WTC11 (cell line): ENCODE measurements at regions of chr9 and their contacts with region 1.

Region 1: DNA sequence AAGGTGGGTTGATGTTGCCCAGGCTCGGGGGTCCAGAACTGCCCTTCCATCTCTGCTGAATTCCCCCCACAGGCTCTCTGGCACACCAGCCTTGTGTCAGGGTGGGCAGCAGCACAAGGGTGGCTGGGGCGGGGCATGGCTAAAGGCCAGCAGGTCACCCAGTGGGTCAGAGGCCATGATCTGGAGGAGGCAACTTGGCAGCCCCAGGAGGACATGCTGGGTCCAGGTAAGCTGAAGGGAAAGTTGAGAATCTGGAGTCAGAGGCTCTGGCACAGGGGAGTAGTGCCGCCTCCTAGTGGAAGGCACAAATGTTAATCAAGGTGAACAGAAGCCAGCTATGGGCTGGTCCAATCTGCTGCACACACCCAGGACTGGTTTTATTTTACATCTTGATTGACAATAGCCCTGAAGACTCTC is 6.2 kb downstream of the TMEM8B start:
- DNase-seq: peak; percentile 52
- ATAC-seq: peak; percentile 90
- H3K4me3 Mint-ChIP-seq: no peak overlapping the region
- H3K27ac Mint-ChIP-seq: no peak overlapping the region
- H3K4me1 Mint-ChIP-seq: peaks cover 19% of the 10 kb centered on the region
- H3K27me3 Mint-ChIP-seq: peaks cover 21% of the 10 kb centered on the region
- CTCF ChIP-seq: peak; percentile 31; the same call in 1 of the 2 replicates

Region 2: DNA sequence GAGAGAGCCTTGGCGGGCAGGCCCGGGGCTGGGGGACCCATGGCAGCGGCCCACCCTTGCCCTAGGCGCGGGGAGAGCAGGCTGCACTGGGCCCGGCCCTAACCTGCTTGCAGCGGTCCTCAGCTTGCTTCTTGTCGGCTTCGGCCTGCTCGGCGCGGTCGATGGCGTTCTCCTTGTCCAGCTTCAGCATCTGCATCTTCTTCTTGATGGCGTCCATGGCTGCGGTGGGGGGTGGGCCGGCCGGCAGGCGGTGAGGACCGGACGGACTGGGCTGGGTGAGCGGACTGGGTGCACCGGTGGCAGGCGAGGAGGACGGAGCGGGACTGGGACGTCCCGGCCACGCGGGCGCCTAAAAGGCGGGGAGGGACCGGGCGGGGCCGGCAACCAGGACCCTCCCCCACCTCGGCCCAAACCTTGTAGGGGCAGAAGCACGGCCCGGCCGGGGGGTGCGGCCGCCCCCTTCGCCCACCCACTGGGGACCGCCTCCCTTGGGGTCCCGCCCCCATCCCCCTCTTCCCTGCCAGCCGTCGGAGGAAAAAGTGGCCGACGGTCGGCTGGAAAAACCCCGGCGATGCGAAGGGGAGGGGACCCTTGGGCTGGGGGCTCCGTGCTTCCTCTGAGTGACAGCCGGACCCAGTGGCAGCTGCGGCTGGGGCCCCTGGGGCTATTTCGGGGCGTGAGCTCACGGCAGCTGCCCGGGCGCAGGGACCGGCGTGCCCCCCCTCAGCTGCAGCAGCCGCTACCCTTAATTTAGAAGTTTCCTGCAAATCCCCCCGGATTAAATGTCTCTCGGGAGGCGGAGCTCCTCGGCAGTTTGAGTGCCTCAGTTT is 145.4 kb before region 1 on chr9 and contains the start of gene TPM2:
- CTCF ChIA-PET with region 1: no interaction called
- POLR2A ChIA-PET with region 1: no interaction called
- DNase-seq: peak; percentile 75
- ATAC-seq: peak; percentile 63
- H3K4me3 Mint-ChIP-seq: peak within 1 kb of the TSS; percentile 91
- H3K27ac Mint-ChIP-seq: 0 out of 2 replicates have a peak within 1 kb of the TSS, but pooled peaks have one; percentile 48
- H3K4me1 Mint-ChIP-seq: peaks cover 23% of the 10 kb centered on the region
- H3K27me3 Mint-ChIP-seq: no peaks in the 10 kb centered on the region
- CTCF ChIP-seq: no peak
- total RNA-seq, gene TPM2: 138 to 146 TPM (median 139 TPM) in 3 replicates

Region 3: GRCh38 chr9:35781066-35781465 is 54.2 kb before region 1 on chr9:
- CTCF ChIA-PET with region 1: no interaction called
- POLR2A ChIA-PET with region 1: no interaction called
- DNase-seq: no peak
- ATAC-seq: no peak
- H3K4me3 Mint-ChIP-seq: no peak overlapping the region
- H3K27ac Mint-ChIP-seq: no peak overlapping the region
- H3K4me1 Mint-ChIP-seq: peaks cover 2% of the 10 kb centered on the region
- H3K27me3 Mint-ChIP-seq: no peaks in the 10 kb centered on the region
- CTCF ChIP-seq: no peak

Region 4: DNA sequence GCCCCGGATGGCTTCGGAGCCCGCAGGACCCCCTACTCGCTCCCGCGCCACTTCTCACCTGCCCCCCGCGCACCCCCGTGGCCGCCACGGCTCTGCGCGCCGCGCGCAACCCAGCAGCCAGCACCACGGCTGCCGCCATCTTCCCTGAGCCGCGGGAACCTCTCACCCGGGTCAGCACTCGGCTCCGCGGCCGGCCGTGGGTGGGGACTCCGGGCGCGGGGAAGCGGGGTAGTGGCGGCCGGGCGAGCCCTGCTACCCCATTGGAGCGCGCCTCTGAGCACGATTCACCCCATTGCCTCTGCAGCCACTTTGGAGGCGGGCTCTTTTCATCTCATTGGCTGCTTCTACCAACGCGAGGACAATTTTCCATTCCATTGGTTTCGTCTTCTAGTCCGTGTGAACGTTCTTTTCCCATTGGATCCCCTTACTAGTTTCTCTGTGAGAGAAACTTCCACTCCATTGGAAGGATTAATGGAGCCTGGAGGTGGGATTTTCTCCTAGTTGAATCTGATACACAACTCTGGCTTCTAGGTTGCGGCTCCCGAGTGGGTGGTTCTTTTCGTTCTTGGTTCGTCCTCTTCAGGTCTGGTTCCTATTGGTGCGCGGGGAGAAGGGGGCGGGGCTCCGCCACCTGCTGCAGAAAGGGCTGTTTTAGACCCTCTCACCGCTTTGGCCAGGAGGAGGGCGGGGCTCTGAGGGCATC is 20.2 kb before region 1 on chr9 and contains the start of gene HINT2:
- CTCF ChIA-PET with region 1: interaction called, 55 read pairs
- POLR2A ChIA-PET with region 1: no interaction called
- DNase-seq: peak; percentile 99
- ATAC-seq: peak; percentile 80
- H3K4me3 Mint-ChIP-seq: peak within 1 kb of the TSS; percentile 91
- H3K27ac Mint-ChIP-seq: peak within 1 kb of the TSS; percentile 100
- H3K4me1 Mint-ChIP-seq: peaks cover 27% of the 10 kb centered on the region
- H3K27me3 Mint-ChIP-seq: peaks cover 11% of the 10 kb centered on the region
- CTCF ChIP-seq: no peak
- total RNA-seq, gene HINT2: 33.6 to 42.7 TPM (median 42.1 TPM) in 3 replicates

Region 5: GRCh38 chr9:35859310-35859989 is 24.2 kb after region 1 on chr9:
- CTCF ChIA-PET with region 1: interaction called, 18 read pairs
- POLR2A ChIA-PET with region 1: no interaction called
- DNase-seq: no peak
- ATAC-seq: no peak
- H3K4me3 Mint-ChIP-seq: no peak overlapping the region
- H3K27ac Mint-ChIP-seq: no peak overlapping the region
- H3K4me1 Mint-ChIP-seq: peaks cover 5% of the 10 kb centered on the region
- H3K27me3 Mint-ChIP-seq: peaks cover 23% of the 10 kb centered on the region
- CTCF ChIP-seq: no peak

Region 6: GRCh38 chr9:35869621-35870216 is 34.5 kb after region 1 on chr9:
- CTCF ChIA-PET with region 1: interaction called, 18 read pairs
- POLR2A ChIA-PET with region 1: no interaction called
- DNase-seq: no peak
- ATAC-seq: no peak
- H3K4me3 Mint-ChIP-seq: no peak overlapping the region
- H3K27ac Mint-ChIP-seq: no peak overlapping the region
- H3K4me1 Mint-ChIP-seq: peaks cover 11% of the 10 kb centered on the region
- H3K27me3 Mint-ChIP-seq: peaks cover 10% of the 10 kb centered on the region
- CTCF ChIP-seq: no peak